Activated B cell treated with CpG ODN at 0.5 μM for 24 hours (primary cell): ENCODE measurements at regions of chr3 and their contacts with region 1.

Region 1: GRCh38 chr3:161220850-161221753 is at the start of gene NMD3:
- DNase-seq: peak; percentile 87
- ATAC-seq: peak; percentile 95
- H3K4me3 Mint-ChIP-seq: peak within 1 kb of the TSS; percentile 91
- H3K27ac Mint-ChIP-seq: peak within 1 kb of the TSS; percentile 86
- H3K4me1 Mint-ChIP-seq: peaks cover 33% of the 10 kb centered on the region
- H3K27me3 Mint-ChIP-seq: peaks cover 6% of the 10 kb centered on the region
- CTCF ChIP-seq: no peak
- total RNA-seq, gene NMD3: 44.2 and 45.8 TPM in 2 replicates

Region 2: GRCh38 chr3:160449636-160450598 is 771.2 kb before region 1 on chr3 and contains the start of gene TRIM59:
- CTCF ChIA-PET with region 1: no interaction called
- POLR2A ChIA-PET with region 1: interaction called, 4 read pairs
- intact Hi-C with region 1: loop called (anchors 1 kb)
- DNase-seq: peak; percentile 92
- ATAC-seq: peak; percentile 96
- H3K4me3 Mint-ChIP-seq: peak within 1 kb of the TSS; percentile 94
- H3K27ac Mint-ChIP-seq: peak within 1 kb of the TSS; percentile 90
- H3K4me1 Mint-ChIP-seq: peaks cover 33% of the 10 kb centered on the region
- H3K27me3 Mint-ChIP-seq: no peaks in the 10 kb centered on the region
- CTCF ChIP-seq: no peak
- total RNA-seq, gene TRIM59: 23.4 TPM in 2 replicates

Region 3: DNA sequence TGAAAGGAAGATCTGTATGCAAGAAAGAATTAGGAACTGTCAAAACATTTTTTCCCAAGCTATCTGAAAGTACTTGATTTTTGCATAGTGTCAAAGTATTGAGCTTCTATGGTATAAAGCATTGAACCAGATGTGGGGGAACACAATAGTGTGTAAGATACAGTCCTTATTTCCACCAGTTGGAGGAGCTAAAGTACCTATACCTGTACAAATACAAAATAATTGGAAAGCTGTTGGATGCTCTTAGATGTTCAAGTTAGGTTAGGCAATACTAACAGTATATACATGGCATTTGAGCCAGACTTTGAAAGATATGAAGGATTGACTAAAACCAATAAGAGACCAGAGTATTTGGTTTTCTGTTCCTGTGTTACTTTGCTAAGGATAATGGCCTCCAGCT is 264.3 kb before region 1 on chr3:
- CTCF ChIA-PET with region 1: interaction called, 11 read pairs
- POLR2A ChIA-PET with region 1: interaction called, 4 read pairs
- intact Hi-C with region 1: loop called (anchors 1 kb)
- DNase-seq: no peak
- ATAC-seq: peak; percentile 54
- H3K4me3 Mint-ChIP-seq: no peak overlapping the region
- H3K27ac Mint-ChIP-seq: no peak overlapping the region
- H3K4me1 Mint-ChIP-seq: no peaks in the 10 kb centered on the region
- H3K27me3 Mint-ChIP-seq: peaks cover 2% of the 10 kb centered on the region
- CTCF ChIP-seq: no peak

Region 4: DNA sequence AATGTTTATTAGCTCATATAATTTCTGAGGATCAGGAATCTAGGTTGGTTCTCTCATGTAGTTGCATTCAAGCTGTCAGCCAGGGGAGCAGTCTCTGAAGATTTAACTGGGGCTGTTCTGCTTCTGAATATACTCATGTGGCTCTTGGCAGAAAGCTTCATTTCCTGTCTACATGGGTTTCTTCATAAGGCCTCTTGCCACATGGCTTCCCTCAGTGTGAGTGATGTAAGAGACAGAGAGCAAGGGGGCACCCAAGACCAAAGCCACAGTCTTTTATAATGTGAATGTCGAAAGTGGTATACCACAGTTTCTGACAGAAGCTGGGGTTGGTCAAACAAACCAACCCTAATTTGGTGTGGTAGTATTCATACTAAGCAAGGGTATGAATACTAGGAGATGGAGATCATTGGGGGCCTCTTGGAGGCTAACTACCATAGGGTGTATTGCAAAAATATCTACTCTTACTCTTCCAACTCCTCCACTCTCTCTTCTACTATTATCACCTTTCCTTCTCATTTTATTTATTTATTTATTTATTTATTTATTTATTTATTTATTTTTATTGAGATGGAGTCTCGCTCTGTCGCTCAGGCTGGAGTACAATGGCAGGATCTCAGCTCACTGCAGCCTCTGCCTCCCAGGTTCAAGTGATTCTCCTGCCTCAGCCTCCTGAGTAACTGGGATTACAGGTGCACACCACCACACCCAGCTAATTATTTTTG is 239.7 kb before region 1 on chr3:
- CTCF ChIA-PET with region 1: no interaction called
- POLR2A ChIA-PET with region 1: no interaction called
- intact Hi-C with region 1: loop called (anchors 5 kb)
- DNase-seq: no peak
- ATAC-seq: peak; percentile 81
- H3K4me3 Mint-ChIP-seq: no peak overlapping the region
- H3K27ac Mint-ChIP-seq: peak overlapping the region; percentile 9
- H3K4me1 Mint-ChIP-seq: peaks cover 18% of the 10 kb centered on the region
- H3K27me3 Mint-ChIP-seq: no peaks in the 10 kb centered on the region
- CTCF ChIP-seq: no peak

Region 5: GRCh38 chr3:161035711-161036110 is 185.4 kb before region 1 on chr3:
- CTCF ChIA-PET with region 1: no interaction called
- POLR2A ChIA-PET with region 1: interaction called, 13 read pairs
- intact Hi-C with region 1: no loop called
- DNase-seq: no peak
- ATAC-seq: peak; percentile 47
- H3K4me3 Mint-ChIP-seq: peak overlapping the region; percentile 54
- H3K27ac Mint-ChIP-seq: no peak overlapping the region
- H3K4me1 Mint-ChIP-seq: peaks cover 19% of the 10 kb centered on the region
- H3K27me3 Mint-ChIP-seq: no peaks in the 10 kb centered on the region
- CTCF ChIP-seq: no peak

Region 6: DNA sequence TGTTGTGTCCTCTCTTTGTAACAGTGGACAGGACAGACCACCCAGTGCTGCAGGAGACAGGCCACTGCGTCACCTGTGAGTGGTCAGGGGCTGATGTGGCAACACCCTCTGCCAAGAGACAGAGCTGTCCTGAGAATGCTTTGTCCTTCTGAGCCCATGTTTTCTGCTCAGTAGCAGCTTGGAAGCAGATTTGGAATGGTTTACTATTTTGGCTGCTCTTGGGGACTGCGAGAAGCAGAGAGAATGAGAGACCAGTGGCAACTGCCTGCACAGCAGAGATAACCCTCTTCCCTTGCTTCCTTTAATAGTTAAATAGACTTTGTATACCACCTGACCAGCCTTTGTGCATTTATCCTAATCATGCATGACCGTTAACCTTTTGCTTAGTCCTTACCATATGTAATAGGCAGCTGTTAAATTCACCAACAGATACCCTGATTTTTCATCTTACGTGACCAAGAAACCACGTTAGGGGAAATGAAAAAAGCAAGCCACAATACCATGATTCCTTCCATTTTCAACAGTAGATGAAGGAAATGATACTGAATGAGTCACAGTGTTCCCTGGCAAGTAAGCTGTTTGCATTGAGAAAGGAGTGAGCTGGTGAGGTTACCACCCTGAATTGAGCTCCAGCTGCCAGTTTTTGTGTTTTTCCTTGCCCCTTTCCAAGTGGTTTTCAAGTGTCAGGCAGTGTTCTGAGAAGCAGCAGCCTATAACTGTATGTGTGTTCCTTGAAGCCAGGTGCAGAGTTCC is 151.4 kb before region 1 on chr3:
- CTCF ChIA-PET with region 1: no interaction called
- POLR2A ChIA-PET with region 1: interaction called, 8 read pairs
- intact Hi-C with region 1: loop called (anchors 1 kb)
- DNase-seq: no peak
- ATAC-seq: peak; percentile 91
- H3K4me3 Mint-ChIP-seq: peak overlapping the region; percentile 51
- H3K27ac Mint-ChIP-seq: peak overlapping the region; percentile 82
- H3K4me1 Mint-ChIP-seq: peaks cover 48% of the 10 kb centered on the region
- H3K27me3 Mint-ChIP-seq: no peaks in the 10 kb centered on the region
- CTCF ChIP-seq: no peak

Region 7: GRCh38 chr3:161104561-161105551 is 116.2 kb before region 1 on chr3 and contains the start of gene B3GALNT1:
- CTCF ChIA-PET with region 1: no interaction called
- POLR2A ChIA-PET with region 1: no interaction called
- intact Hi-C with region 1: loop called (anchors 2 kb)
- DNase-seq: peak; percentile 39
- ATAC-seq: peak; percentile 85
- H3K4me3 Mint-ChIP-seq: peak within 1 kb of the TSS; percentile 82
- H3K27ac Mint-ChIP-seq: no peak within 1 kb of the TSS
- H3K4me1 Mint-ChIP-seq: peaks cover 12% of the 10 kb centered on the region
- H3K27me3 Mint-ChIP-seq: peaks cover 8% of the 10 kb centered on the region
- CTCF ChIP-seq: no peak
- total RNA-seq, gene B3GALNT1: 4.6 and 8.5 TPM in 2 replicates